ENCODE measurements at regions of chr9 and their contacts with region 1.

Region 1: GRCh38 chr9:79264511-79265355 is 307.0 kb upstream of the TLE4 start:
- DNase-seq: no peak
- ATAC-seq: no peak
- H3K4me3 ChIP-seq: no peak overlapping the region
- H3K27ac ChIP-seq: no peak overlapping the region
- H3K4me1 ChIP-seq: no peaks in the 10 kb centered on the region
- H3K27me3 ChIP-seq: no peaks in the 10 kb centered on the region
- CTCF ChIP-seq: no peak
- POLR2A ChIP-seq: no peak

Region 2: GRCh38 chr9:79312686-79313421 is 48.1 kb after region 1 on chr9:
- intact Hi-C with region 1: loop called in 1 of 2 experiments (anchors 5 kb)
- DNase-seq: no peak
- ATAC-seq: no peak
- H3K4me3 ChIP-seq: no peak overlapping the region
- H3K27ac ChIP-seq: no peak overlapping the region
- H3K4me1 ChIP-seq: no peaks in the 10 kb centered on the region
- H3K27me3 ChIP-seq: no peaks in the 10 kb centered on the region
- CTCF ChIP-seq: no peak
- POLR2A ChIP-seq: no peak

Region 3: DNA sequence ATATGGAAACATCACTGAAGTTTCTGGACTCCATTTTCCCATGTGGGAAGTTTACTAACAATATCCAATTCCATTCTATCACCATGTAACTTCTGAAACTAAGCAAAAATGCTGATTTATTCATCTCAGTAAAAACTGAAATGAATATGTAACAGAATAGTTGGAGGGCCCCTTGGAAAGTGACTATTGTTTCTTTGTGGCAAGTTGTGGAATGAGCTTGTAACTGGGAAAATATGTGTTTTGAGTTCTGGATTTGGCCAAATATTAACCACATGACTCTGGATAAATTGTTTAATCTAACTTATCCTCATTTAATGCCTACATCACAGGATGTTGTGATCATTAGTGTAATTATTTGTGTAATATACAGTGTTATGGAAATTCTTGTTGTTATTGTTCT is 926.4 kb after region 1 on chr9:
- intact Hi-C with region 1: no loop called
- DNase-seq: no peak
- ATAC-seq: no peak
- H3K4me3 ChIP-seq: no peak overlapping the region
- H3K27ac ChIP-seq: no peak overlapping the region
- H3K4me1 ChIP-seq: no peaks in the 10 kb centered on the region
- H3K27me3 ChIP-seq: no peaks in the 10 kb centered on the region
- CTCF ChIP-seq: no peak
- POLR2A ChIP-seq: no peak